ENCODE measurements at regions of chr21 and their contacts with region 1.

Region 1: GRCh38 chr21:16102113-16102512 is 372.3 kb downstream of the USP25 start:
- DNase-seq: no peak
- ATAC-seq: no peak
- H3K4me3 ChIP-seq: no peak overlapping the region
- H3K27ac ChIP-seq: no peak overlapping the region
- H3K4me1 ChIP-seq: no peaks in the 10 kb centered on the region
- H3K27me3 ChIP-seq: no peaks in the 10 kb centered on the region

Region 2: GRCh38 chr21:15001857-15002606 is 1100.1 kb before region 1 on chr21:
- intact Hi-C with region 1: loop called in 1 of 2 experiments (anchors 10 kb)
- DNase-seq: no peak
- ATAC-seq: no peak
- H3K4me3 ChIP-seq: no peak overlapping the region
- H3K27ac ChIP-seq: no peak overlapping the region
- H3K4me1 ChIP-seq: peaks cover 5% of the 10 kb centered on the region in 2 donors
- H3K27me3 ChIP-seq: no peaks in the 10 kb centered on the region

Region 3: GRCh38 chr21:16055014-16055413 is 47.1 kb before region 1 on chr21:
- intact Hi-C with region 1: no loop called
- DNase-seq: no peak
- ATAC-seq: no peak
- H3K4me3 ChIP-seq: no peak overlapping the region
- H3K27ac ChIP-seq: no peak overlapping the region
- H3K4me1 ChIP-seq: no peaks in the 10 kb centered on the region
- H3K27me3 ChIP-seq: no peaks in the 10 kb centered on the region